ENCODE measurements at regions of chr6 and their contacts with region 1.

Region 1: GRCh38 chr6:161370880-161371279 is 97.0 kb upstream of the AGPAT4 start:
- DNase-seq: no peak
- ATAC-seq: no peak
- H3K4me3 ChIP-seq: no peak overlapping the region
- H3K27ac ChIP-seq: no peak overlapping the region
- H3K4me1 ChIP-seq: no peaks in the 10 kb centered on the region
- H3K27me3 ChIP-seq: no peaks in the 10 kb centered on the region

Region 2: GRCh38 chr6:160733050-160733646 is 637.7 kb before region 1 on chr6:
- intact Hi-C with region 1: loop called (anchors 5 kb)
- DNase-seq: no peak
- ATAC-seq: peak; percentile 62
- H3K4me3 ChIP-seq: no peak overlapping the region
- H3K27ac ChIP-seq: no peak overlapping the region
- H3K4me1 ChIP-seq: no peaks in the 10 kb centered on the region
- H3K27me3 ChIP-seq: no peaks in the 10 kb centered on the region

Region 3: DNA sequence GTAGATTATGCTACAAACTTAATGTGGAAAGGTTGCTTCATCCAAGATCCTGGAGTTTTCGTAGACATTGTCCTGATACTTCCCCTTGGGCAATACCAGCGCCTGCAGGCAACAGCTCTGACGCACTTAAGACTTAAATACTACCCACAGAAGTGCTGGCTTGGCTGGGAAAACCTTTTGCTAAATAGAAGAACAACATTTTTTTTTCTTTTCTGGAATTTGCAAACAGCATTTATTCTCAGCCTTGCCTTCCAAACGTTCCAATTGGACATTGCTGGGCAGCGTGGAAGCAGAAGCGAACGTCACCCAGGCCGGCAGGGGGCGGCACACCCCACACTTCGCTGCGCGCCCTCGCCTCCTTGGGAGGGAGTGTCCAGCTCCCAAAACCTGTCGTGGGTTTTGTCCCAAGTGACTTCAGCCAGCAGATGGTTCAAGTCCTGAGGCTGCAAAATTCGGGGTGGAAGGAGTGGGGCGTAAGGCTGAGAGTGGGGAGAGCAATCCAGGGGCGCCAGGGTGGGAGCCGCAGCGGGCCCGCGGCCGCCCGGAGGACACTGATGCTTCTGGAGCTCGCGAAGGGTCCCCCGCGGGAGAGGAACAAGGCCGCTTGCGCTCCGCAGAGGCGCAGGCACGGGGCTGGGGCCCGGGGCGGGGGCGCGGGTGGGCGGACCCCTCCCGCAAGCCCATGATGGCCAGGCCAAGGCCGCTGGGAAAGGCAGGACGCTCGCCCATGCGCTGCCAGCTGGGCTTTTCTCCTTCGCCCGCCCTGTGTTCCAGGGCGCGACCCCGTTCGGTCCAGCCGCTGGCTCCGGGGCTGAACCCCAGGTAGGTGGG is 440.1 kb before region 1 on chr6:
- intact Hi-C with region 1: loop called (anchors 2 kb)
- DNase-seq: peak; percentile 82 to 94
- ATAC-seq: peak; percentile 91
- H3K4me3 ChIP-seq: peak overlapping the region; percentile 19 to 41
- H3K27ac ChIP-seq: no peak overlapping the region
- H3K4me1 ChIP-seq: no peaks in the 10 kb centered on the region
- H3K27me3 ChIP-seq: no peaks in the 10 kb centered on the region

Region 4: DNA sequence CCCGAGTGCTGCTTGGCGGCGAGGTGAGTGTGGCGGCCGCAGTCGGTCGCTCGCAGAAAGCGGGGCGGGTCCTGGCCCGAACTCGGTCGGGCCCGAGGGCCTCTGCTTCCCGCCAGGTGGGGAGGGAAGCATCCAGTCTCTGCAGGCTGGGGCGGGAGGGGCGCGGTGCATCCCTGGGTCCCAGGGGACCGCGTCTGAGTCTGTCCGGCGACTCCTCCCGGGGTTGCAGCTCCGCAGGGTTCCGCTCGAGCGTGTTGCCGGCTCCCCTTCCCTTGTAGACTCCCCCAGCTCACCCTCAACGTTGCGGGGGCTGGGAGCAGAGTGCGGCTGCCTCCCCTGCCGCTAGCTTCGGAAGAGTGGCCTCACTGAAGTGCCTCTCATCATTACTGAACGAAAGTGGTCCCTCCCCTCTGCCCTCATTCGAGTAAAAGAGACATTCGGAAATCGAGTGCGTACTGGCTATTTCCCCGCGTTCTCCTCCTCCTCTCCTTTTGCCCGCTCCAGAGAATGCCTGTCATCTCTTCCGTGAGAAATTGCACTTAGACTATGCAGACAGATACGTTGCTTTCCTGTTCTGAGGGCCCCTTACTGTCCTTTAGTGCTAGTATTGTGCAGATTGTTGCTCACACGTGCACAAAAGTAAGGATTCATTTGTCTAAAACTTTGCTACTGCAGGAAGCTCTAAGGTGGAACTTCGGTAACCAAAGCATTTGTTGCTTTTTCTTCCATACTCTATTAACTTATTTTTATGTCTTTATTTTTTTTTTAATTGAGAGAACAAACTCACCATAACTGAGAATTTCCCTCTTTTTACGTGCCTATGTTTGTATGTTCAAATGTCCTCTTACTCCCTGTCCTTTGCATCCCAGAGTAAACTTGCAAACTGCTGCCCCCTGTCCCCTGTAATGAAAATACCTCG is 378.6 kb before region 1 on chr6:
- intact Hi-C with region 1: loop called in 1 of 2 experiments (anchors 5 kb)
- DNase-seq: peak in 1 of 2 donors; percentile 64
- ATAC-seq: peak; percentile 69
- H3K4me3 ChIP-seq: peak overlapping the region; percentile 50 to 88
- H3K27ac ChIP-seq: peak overlapping the region; percentile 23 to 56
- H3K4me1 ChIP-seq: peaks cover 0 to 4% of the 10 kb centered on the region in 2 donors
- H3K27me3 ChIP-seq: no peaks in the 10 kb centered on the region

Region 5: DNA sequence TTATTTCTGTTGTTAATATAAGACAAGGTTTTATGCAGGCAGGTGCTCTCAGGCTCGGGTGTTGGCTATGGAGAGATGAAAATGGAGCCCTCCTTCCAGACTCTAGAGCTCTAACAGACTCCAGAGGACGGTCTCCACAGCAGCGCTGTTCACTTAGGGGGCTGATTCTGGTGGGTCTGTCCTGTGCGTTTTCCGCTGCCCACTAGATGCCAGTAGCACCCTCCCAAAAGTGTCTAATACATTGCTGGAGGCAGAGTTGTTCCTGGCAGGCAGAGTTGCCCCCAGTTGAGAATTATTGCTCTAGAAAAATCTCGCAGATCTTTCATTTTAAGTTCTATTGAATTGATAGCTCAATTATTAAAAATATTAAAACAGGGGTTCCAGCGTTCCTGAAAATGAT is 269.4 kb before region 1 on chr6:
- intact Hi-C with region 1: loop called (anchors 5 kb)
- DNase-seq: no peak
- ATAC-seq: no peak
- H3K4me3 ChIP-seq: no peak overlapping the region
- H3K27ac ChIP-seq: no peak overlapping the region
- H3K4me1 ChIP-seq: no peaks in the 10 kb centered on the region
- H3K27me3 ChIP-seq: no peaks in the 10 kb centered on the region

Region 6: GRCh38 chr6:161152907-161153662 is 217.8 kb before region 1 on chr6:
- intact Hi-C with region 1: loop called (anchors 5 to 10 kb)
- DNase-seq: no peak
- ATAC-seq: peak; percentile 36
- H3K4me3 ChIP-seq: no peak overlapping the region
- H3K27ac ChIP-seq: no peak overlapping the region
- H3K4me1 ChIP-seq: no peaks in the 10 kb centered on the region
- H3K27me3 ChIP-seq: no peaks in the 10 kb centered on the region